Breast epithelium (tissue), 4 donors: ENCODE measurements at regions of chr1 and their contacts with region 1.

Region 1: DNA sequence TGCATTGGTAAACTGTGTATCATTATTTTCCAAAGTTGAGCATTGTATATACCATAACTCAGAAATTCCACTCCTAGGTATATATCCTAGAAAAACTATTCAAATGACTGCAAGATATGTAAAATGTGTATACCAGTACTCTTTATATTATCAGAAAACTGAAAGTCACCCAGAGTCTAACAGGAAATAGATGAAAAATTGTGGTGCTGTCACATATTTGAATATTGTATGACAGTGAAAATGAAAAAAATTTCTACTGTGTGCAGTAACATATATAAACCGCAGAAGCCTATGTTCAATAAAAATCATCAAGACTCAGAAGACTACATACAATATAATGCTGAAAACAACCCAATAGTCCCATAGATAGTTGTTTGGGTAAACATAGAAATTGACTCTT is 74.4 kb upstream of the LYPLAL1 start:
- DNase-seq: no peak
- H3K4me3 ChIP-seq: no peak overlapping the region
- H3K27ac ChIP-seq: no peak overlapping the region
- H3K4me1 ChIP-seq: no peaks in the 10 kb centered on the region
- H3K27me3 ChIP-seq: no peaks in the 10 kb centered on the region
- CTCF ChIP-seq: no peak
- POLR2A ChIP-seq: no peak

Region 2: GRCh38 chr1:218796773-218797172 is 302.5 kb before region 1 on chr1:
- intact Hi-C with region 1: loop called (anchors 5 kb)
- DNase-seq: no peak
- H3K4me3 ChIP-seq: no peak overlapping the region
- H3K27ac ChIP-seq: no peak overlapping the region
- H3K4me1 ChIP-seq: no peaks in the 10 kb centered on the region
- H3K27me3 ChIP-seq: no peaks in the 10 kb centered on the region
- CTCF ChIP-seq: no peak
- POLR2A ChIP-seq: no peak